Testis (tissue), 5 donors: ENCODE measurements at regions of chr21 and their contacts with region 1.

Region 1: DNA sequence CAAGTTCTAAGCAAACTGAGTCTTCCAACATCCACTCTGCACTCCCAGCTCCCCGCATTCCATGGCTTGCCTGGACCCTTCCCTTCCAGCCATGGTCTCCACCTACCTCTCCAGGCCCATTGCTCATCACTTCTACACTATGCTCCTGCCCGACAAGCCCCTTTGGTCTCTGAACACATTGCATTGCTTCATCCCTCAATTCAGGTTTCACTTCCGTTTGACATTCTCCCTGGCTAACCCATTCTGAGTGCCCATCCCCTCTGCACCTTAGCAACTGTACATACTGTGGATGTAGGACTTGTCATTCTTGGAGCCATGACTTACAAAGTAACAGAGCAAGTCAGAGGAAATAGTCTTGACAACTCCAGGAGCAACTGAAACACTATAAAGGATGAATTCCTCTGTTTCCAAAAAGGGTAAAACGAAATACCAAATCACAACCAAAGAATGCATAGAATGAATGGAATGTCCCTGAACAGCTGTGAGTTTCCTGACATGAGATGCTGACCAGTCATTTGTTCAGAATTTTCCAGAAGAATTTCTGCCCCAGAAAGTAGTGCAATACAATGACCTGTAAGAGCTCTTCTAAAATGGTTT is 66.7 kb downstream of the KCNJ6 start:
- DNase-seq: no peak
- H3K4me3 ChIP-seq: no peak overlapping the region
- H3K27ac ChIP-seq: no peak overlapping the region
- H3K4me1 ChIP-seq: no peaks in the 10 kb centered on the region
- H3K27me3 ChIP-seq: no peaks in the 10 kb centered on the region
- CTCF ChIP-seq: no peak
- POLR2A ChIP-seq: no peak

Region 2: GRCh38 chr21:37787456-37787855 is 62.1 kb before region 1 on chr21:
- intact Hi-C with region 1: loop called (anchors 10 kb)
- DNase-seq: no peak
- H3K4me3 ChIP-seq: no peak overlapping the region
- H3K27ac ChIP-seq: no peak overlapping the region
- H3K4me1 ChIP-seq: no peaks in the 10 kb centered on the region
- H3K27me3 ChIP-seq: no peaks in the 10 kb centered on the region
- CTCF ChIP-seq: no peak
- POLR2A ChIP-seq: no peak